ENCODE measurements at regions of chr3 and their contacts with region 1.

Region 1: GRCh38 chr3:106013971-106014370 is 145.2 kb upstream of the CBLB start:
- DNase-seq: peak; percentile 19
- ATAC-seq: peak; percentile 72
- H3K4me3 Mint-ChIP-seq: no peak overlapping the region
- H3K27ac Mint-ChIP-seq: peak overlapping the region; percentile 68
- H3K4me1 Mint-ChIP-seq: peaks cover 50% of the 10 kb centered on the region
- H3K27me3 Mint-ChIP-seq: no peaks in the 10 kb centered on the region

Region 2: GRCh38 chr3:105686278-105686897 is 327.6 kb before region 1 on chr3:
- CTCF ChIA-PET with region 1: no interaction called
- POLR2A ChIA-PET with region 1: no interaction called
- intact Hi-C with region 1: loop called in 1 of 2 experiments (anchors 5 kb)
- DNase-seq: no peak
- ATAC-seq: no peak
- H3K4me3 Mint-ChIP-seq: no peak overlapping the region
- H3K27ac Mint-ChIP-seq: peak overlapping the region; percentile 42
- H3K4me1 Mint-ChIP-seq: peaks cover 24% of the 10 kb centered on the region
- H3K27me3 Mint-ChIP-seq: no peaks in the 10 kb centered on the region

Region 3: DNA sequence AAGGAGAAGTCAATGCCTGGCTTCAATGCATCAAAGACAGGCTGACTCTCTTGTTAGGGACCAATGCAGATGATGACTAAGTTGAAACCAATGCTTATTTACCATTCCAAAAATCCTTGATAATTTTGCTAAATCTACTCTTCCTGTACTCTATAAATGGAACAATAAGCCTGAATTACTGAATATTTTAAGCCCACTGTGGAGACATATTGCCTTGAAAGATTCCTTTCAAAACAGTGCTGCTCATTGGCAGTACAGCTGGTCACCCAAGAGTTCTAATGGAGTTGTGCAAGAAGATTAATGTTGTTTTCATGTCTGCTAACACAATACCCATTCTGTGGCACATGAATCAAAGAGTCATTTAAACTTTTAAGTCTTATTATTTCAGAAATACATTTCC is 35.9 kb after region 1 on chr3:
- CTCF ChIA-PET with region 1: no interaction called
- POLR2A ChIA-PET with region 1: no interaction called
- intact Hi-C with region 1: loop called in 1 of 2 experiments (anchors 1 kb)
- DNase-seq: no peak
- ATAC-seq: no peak
- H3K4me3 Mint-ChIP-seq: no peak overlapping the region
- H3K27ac Mint-ChIP-seq: peak overlapping the region; percentile 42
- H3K4me1 Mint-ChIP-seq: peaks cover 18% of the 10 kb centered on the region
- H3K27me3 Mint-ChIP-seq: no peaks in the 10 kb centered on the region

Region 4: DNA sequence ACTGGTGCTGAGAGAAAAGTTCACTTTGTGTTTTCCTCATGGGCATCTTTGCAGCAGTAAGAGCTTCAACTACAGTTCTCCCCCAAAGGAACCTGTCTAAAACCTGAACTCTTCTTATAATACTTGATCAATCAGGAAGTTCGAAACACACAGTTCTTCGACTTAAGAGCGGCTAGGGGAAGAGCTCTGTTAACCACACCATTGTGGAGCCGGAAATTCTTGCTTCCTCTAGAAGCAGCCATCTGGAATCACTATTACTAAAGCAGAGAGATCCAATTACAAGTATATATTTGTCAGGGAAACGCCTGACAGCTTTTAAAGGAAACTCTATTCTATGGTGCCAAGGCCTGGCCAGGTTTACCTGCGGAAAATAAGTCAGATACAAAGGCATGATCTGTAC is 192.2 kb after region 1 on chr3:
- CTCF ChIA-PET with region 1: no interaction called
- POLR2A ChIA-PET with region 1: no interaction called
- intact Hi-C with region 1: loop called in 1 of 2 experiments (anchors 2 kb)
- DNase-seq: peak; percentile 31
- ATAC-seq: peak; percentile 67
- H3K4me3 Mint-ChIP-seq: peak overlapping the region; percentile 65
- H3K27ac Mint-ChIP-seq: peak overlapping the region; percentile 94
- H3K4me1 Mint-ChIP-seq: peaks cover 50% of the 10 kb centered on the region
- H3K27me3 Mint-ChIP-seq: no peaks in the 10 kb centered on the region

Region 5: GRCh38 chr3:106457286-106458180 is 443.6 kb after region 1 on chr3:
- CTCF ChIA-PET with region 1: no interaction called
- POLR2A ChIA-PET with region 1: no interaction called
- intact Hi-C with region 1: no loop called
- DNase-seq: peak; percentile 56
- ATAC-seq: peak; percentile 99
- H3K4me3 Mint-ChIP-seq: no peak overlapping the region
- H3K27ac Mint-ChIP-seq: peak overlapping the region; percentile 1
- H3K4me1 Mint-ChIP-seq: peaks cover 15% of the 10 kb centered on the region
- H3K27me3 Mint-ChIP-seq: no peaks in the 10 kb centered on the region

Region 6: DNA sequence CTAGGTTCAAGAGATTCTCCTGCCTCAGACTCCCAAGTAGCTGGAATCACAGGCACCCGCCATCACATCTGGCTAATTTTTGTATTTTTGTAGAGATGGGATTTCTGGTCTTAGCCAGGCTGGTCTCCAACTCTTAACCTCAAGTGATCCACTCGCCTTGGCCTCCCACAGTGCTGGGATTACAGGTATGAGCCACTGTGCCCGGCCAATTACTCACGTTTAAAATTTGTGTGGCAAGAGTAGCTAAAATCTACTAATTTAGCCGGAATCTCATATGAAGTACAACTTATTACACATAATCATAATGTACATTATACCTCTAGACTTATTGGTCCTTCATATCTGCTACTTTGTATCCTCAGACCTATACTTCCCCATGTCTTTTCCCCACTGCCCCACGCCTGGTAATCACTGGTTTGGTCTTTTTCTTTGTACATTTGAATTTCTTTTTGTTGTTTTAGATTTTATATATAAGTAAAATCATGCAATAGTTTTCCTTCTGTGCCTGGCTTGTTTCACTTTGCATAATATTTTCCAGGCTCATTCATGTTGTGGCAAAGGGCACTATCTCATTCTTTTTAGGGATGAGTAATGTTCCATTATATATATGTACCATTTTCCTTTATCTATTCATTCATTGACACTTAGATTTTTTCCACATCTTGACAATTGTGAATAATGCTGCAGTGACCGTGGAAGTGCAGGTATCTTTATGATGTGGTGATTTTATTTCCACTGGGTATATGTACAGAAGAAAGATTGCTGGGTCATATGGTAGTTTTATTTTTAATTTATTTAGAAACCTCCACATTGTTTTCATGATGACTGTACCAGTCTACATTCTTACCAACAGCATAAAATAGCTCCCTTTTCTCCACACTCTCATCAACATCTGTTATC is 459.9 kb after region 1 on chr3:
- CTCF ChIA-PET with region 1: no interaction called
- POLR2A ChIA-PET with region 1: no interaction called
- intact Hi-C with region 1: loop called in 1 of 2 experiments (anchors 5 kb)
- DNase-seq: peak; percentile 47
- ATAC-seq: peak; percentile 86
- H3K4me3 Mint-ChIP-seq: no peak overlapping the region
- H3K27ac Mint-ChIP-seq: peak overlapping the region; percentile 88
- H3K4me1 Mint-ChIP-seq: peaks cover 28% of the 10 kb centered on the region
- H3K27me3 Mint-ChIP-seq: no peaks in the 10 kb centered on the region

Measured in activated CD4-positive, alpha-beta T cell treated with anti-CD3 and anti-CD28 coated beads for 36 hours (primary cell).